GM12878 (cell line): ENCODE measurements at regions of chr12 and their contacts with region 1.

Region 1: DNA sequence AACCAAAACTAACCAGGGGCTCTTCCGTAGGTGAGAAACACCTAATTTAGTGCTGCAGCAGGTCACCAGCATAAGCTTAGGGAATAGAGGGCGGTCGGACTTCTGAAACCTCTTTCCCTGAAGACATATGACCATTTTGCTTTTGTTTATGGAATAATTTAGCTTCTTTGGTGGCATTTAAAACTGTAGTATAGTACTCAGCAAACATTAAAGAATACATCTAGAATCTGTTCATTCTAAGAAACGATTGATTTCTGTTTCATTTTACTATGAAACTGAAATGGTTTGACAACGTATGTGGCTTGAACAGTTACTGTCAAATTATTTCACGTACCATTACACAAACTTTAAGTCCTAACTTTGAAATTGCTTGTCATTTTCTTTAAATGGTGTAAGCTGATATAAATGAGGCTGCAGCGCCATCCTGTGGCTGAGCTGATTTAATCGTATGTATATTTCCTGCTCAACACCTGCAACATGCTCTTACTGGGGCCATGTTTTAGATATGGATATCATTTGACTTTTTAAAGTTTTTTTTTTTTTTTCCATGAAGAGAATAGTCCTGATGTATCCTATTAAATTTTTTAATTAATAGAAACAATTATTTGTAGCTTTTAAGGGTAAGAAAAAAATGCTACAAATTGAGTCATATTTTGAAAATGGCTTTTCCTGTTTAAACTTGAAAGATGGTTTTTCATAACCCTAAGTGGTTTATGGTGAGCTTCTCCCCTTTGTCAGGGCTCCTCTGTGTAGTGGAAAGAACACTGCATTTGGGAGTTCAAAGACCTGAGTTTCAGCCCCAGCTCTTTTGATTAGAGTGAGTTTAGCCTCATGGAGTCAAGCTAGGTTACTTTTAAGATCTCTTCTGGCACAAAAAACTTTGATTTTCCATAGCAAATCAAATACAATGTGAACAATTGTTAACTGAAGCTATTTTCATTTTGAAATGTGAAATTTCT is 27.4 kb downstream of the CFAP54 start:
- DNase-seq: peak; percentile 95
- ATAC-seq: peak; percentile 80
- H3K4me3 ChIP-seq: peak overlapping the region; percentile 24; the same call in 1 of the 2 replicates
- H3K27ac ChIP-seq: peak overlapping the region; percentile 64
- H3K4me1 ChIP-seq: peaks cover 16% of the 10 kb centered on the region
- H3K27me3 ChIP-seq: no peaks in the 10 kb centered on the region
- CTCF ChIP-seq: peak; percentile 42 to 87 (median 60); a peak in 5 of 6 replicates
- EP300 ChIP-seq: no peak
- POLR2A ChIP-seq: no peak
- RAD21 ChIP-seq: peak; percentile 91

Region 2: DNA sequence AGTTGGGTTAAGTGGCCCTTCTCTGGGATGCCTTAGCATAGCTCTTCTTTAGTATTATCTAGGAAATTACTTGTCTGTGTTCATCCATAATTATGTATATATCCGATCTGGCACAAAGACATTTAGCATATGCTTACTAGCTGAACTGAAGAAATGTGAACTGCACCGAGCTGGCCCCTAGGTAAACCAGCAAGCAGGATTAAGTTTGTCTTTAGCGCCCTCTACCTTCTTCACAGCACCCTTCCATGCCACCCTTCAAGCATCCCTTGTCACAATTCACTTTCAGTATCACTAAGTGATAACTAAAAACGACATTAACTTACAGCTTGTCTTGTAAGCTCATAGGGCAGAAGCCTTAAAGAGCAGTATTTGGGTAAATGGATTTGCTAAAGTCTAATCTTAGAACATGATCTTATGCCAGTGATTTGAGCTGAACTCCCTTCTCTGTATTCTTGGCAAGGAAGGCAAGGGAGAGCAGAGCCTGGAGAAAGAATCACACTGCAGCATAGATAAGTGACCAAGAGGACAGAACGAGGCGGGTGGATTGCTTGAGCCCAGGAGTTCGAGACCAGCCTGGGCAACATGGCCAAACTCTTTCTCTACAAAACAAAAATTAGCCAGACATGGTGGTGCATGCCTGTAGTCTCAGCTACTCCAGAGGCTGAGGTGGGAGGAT is 518.0 kb before region 1 on chr12:
- CTCF ChIA-PET with region 1: interaction called, 15 read pairs
- POLR2A ChIA-PET with region 1: no interaction called
- RAD21 ChIA-PET with region 1: interaction called, 5 read pairs
- SMC1A ChIA-PET with region 1: interaction called, 17 read pairs
- in situ Hi-C with region 1: no loop called
- intact Hi-C with region 1: no loop called
- DNase-seq: peak; percentile 34
- ATAC-seq: peak; percentile 99
- H3K4me3 ChIP-seq: no peak overlapping the region
- H3K27ac ChIP-seq: no peak overlapping the region
- H3K4me1 ChIP-seq: no peaks in the 10 kb centered on the region
- H3K27me3 ChIP-seq: no peaks in the 10 kb centered on the region
- CTCF ChIP-seq: peak; percentile 69 to 79 (median 73); a peak in 5 of 6 replicates
- EP300 ChIP-seq: no peak
- POLR2A ChIP-seq: no peak
- RAD21 ChIP-seq: peak; percentile 69

Region 3: DNA sequence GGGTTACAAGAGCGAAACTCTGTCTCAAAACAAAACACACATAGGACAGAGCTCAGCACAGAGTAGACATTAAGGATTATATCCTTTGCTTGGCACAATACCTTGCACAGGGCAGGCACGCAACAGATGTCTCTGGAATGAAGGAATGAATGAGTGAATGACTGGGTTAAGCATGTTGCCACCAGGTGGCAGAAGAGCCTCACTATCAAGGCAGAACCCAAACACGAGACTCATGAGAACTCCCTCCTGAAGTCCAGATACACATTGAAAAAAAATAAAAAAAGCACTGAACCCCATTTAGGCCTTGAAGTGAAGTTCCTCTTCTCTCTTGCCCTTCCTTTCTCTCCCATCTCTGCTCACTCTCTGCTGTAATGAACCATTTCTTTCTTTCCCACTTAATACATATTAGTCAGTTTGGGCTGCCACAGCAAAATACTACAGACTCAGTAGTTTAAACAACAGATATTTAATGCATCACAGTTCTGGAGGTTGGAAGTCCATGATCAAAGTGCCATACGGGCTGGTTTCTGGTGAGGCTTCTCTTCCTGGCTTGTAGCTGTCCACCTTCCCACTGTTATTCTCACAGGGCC is 454.8 kb before region 1 on chr12:
- CTCF ChIA-PET with region 1: interaction called, 38 read pairs
- POLR2A ChIA-PET with region 1: no interaction called
- RAD21 ChIA-PET with region 1: interaction called, 13 read pairs
- SMC1A ChIA-PET with region 1: interaction called, 36 read pairs
- in situ Hi-C with region 1: loop called (anchors 5 kb)
- intact Hi-C with region 1: loop called (anchors 1 kb)
- DNase-seq: peak; percentile 79
- ATAC-seq: peak; percentile 96
- H3K4me3 ChIP-seq: no peak overlapping the region
- H3K27ac ChIP-seq: no peak overlapping the region
- H3K4me1 ChIP-seq: peaks cover 4% of the 10 kb centered on the region; the same call in 1 of the 2 replicates
- H3K27me3 ChIP-seq: no peaks in the 10 kb centered on the region
- CTCF ChIP-seq: peak; percentile 67 to 88 (median 81); a peak in 5 of 6 replicates
- EP300 ChIP-seq: no peak
- POLR2A ChIP-seq: no peak
- RAD21 ChIP-seq: peak; percentile 91

Region 4: DNA sequence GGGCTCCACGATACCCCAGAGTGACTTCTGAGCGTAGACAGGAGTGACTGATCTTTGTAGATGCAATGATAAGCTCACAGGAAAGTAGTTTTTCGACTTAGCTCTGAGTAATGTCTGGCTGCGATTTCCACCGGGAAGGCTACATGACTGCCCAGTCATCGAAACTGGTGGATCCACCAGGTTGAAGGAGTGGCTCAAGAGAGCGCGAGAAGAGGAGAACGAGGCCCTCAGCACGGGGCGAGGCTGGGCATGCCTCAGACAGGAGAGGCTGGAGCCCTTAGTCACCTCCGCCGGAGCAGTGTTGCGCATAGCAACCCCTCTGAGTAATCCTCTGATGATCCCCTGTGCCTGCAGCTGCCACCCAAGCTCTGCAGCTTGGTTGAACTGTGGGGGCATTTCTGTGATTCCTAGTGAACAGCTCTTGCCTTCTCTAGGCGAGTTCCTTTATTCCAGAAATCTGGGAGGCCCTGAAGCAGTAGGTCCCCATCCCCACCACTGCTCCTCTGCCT is 297.0 kb before region 1 on chr12:
- CTCF ChIA-PET with region 1: interaction called, 70 read pairs
- POLR2A ChIA-PET with region 1: interaction called, 6 read pairs
- RAD21 ChIA-PET with region 1: interaction called, 62 read pairs
- SMC1A ChIA-PET with region 1: interaction called, 73 read pairs
- in situ Hi-C with region 1: loop called (anchors 5 kb)
- intact Hi-C with region 1: loop called (anchors 2 kb)
- DNase-seq: no peak
- ATAC-seq: no peak
- H3K4me3 ChIP-seq: no peak overlapping the region
- H3K27ac ChIP-seq: no peak overlapping the region
- H3K4me1 ChIP-seq: peaks cover 13% of the 10 kb centered on the region
- H3K27me3 ChIP-seq: no peaks in the 10 kb centered on the region
- CTCF ChIP-seq: no peak
- EP300 ChIP-seq: no peak
- POLR2A ChIP-seq: no peak
- RAD21 ChIP-seq: no peak

Region 5: DNA sequence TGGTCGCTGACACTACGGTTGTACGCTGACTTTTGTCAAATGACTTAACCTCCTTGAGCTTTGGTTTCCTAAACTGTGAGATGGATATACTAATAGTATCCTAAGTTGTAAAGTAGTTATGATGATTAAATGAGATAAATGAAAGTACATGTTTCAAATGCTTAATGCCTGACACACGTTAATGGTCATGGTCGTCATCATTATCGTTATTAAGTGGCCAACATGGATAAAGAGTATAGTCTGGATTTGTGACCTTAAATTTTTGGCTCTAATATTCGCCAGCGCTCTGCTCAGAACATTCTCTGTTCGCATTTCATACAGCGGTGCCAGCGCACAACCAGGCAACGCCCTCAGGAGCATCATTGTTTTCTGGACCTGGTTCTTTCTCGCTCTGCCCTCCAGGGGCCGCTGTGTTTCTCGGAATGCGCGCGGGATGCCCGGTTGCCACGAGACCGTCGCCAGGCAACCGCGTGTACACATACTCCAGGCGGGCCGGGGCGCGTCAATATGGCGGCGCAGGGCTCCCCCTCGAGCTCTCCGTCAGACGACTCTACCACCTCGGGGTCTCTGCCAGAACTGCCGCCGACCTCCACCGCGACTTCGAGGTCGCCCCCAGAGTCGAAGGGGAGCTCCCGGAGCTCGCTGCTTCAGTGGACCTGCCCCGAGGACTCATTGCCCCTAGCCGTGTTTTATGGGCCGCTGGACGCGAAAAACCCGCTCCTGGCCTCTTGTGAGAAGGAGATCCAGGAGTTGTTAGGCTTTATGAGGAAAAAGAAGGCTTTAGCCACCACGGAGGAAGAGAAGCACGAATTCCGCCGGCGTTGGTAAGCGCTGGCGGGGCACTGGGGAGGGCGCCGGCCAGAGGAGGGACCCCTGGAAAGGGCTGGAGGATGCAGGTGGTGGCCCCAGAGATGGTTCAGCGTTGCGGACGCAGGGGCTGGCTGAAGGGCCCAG is 27.4 kb before region 1 on chr12 and contains the start of gene CFAP54:
- CTCF ChIA-PET with region 1: interaction called, 304 read pairs
- POLR2A ChIA-PET with region 1: interaction called, 7 read pairs
- RAD21 ChIA-PET with region 1: interaction called, 118 read pairs
- SMC1A ChIA-PET with region 1: interaction called, 237 read pairs
- in situ Hi-C with region 1: no loop called
- intact Hi-C with region 1: loop called (anchors 1 kb)
- DNase-seq: peak; percentile 65
- ATAC-seq: peak; percentile 91
- H3K4me3 ChIP-seq: peak within 1 kb of the TSS; percentile 73
- H3K27ac ChIP-seq: no peak within 1 kb of the TSS
- H3K4me1 ChIP-seq: peaks cover 14% of the 10 kb centered on the region
- H3K27me3 ChIP-seq: no peaks in the 10 kb centered on the region
- CTCF ChIP-seq: peak; percentile 88 to 98 (median 91)
- EP300 ChIP-seq: peak; percentile 12 to 40; a peak in 2 of 4 replicates
- POLR2A ChIP-seq: no peak
- RAD21 ChIP-seq: peak; percentile 80
- polyA plus RNA-seq, gene CFAP54: 0.19 to 0.55 TPM

Region 6: DNA sequence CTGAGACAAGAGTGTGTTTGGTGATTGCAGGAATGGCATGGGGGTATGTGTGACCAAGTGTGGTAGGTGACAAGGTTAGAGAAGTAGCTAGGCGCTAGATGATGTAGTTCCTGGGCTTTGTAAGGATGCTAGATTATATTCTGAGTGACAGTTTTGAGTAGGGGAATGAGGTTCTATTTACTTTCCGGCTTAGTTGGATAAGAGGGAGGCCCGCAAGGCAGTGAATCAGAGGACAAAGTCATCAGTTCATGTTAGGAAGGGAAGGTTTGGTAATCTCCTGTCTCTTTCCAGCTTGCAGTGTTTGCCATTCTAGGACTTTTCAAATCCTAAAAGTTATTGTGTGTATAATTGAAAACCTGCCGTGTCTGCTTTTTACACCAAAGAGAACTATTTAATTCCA is 17.6 kb after region 1 on chr12:
- CTCF ChIA-PET with region 1: interaction called, 7 read pairs
- POLR2A ChIA-PET with region 1: no interaction called
- RAD21 ChIA-PET with region 1: interaction called, 8 read pairs
- SMC1A ChIA-PET with region 1: interaction called, 11 read pairs
- in situ Hi-C with region 1: no loop called
- intact Hi-C with region 1: no loop called
- DNase-seq: no peak
- ATAC-seq: no peak
- H3K4me3 ChIP-seq: no peak overlapping the region
- H3K27ac ChIP-seq: no peak overlapping the region
- H3K4me1 ChIP-seq: no peaks in the 10 kb centered on the region
- H3K27me3 ChIP-seq: no peaks in the 10 kb centered on the region
- CTCF ChIP-seq: no peak
- EP300 ChIP-seq: no peak
- POLR2A ChIP-seq: no peak
- RAD21 ChIP-seq: no peak

Region 7: GRCh38 chr12:96578526-96579125 is 61.9 kb after region 1 on chr12:
- CTCF ChIA-PET with region 1: interaction called, 29 read pairs
- POLR2A ChIA-PET with region 1: no interaction called
- RAD21 ChIA-PET with region 1: interaction called, 16 read pairs
- SMC1A ChIA-PET with region 1: interaction called, 18 read pairs
- in situ Hi-C with region 1: no loop called
- intact Hi-C with region 1: no loop called
- DNase-seq: peak; percentile 57
- ATAC-seq: peak; percentile 99
- H3K4me3 ChIP-seq: no peak overlapping the region
- H3K27ac ChIP-seq: no peak overlapping the region
- H3K4me1 ChIP-seq: no peaks in the 10 kb centered on the region
- H3K27me3 ChIP-seq: no peaks in the 10 kb centered on the region
- CTCF ChIP-seq: peak; percentile 52 to 79 (median 57); a peak in 5 of 6 replicates
- EP300 ChIP-seq: no peak
- POLR2A ChIP-seq: no peak
- RAD21 ChIP-seq: peak; percentile 93

Region 8: DNA sequence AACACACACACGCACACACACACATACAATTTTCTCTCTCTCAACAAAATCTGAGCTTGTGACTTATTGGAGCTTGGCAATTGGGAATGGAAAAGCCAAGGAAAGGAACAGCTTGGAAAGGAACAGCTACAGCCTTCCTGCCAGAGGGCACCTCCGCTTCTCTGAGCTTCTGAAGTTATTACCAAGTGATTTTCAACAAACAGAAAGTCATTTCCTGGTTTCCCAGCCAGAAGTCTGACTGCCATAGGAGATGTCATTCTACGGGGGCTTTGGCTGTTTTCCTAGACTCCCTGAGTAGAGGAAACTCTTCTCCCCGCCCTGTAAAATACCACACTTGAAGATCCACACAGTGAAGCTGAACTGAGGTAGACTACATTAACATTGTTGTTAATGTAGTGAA is 171.0 kb after region 1 on chr12:
- CTCF ChIA-PET with region 1: no interaction called
- POLR2A ChIA-PET with region 1: no interaction called
- RAD21 ChIA-PET with region 1: no interaction called
- SMC1A ChIA-PET with region 1: no interaction called
- in situ Hi-C with region 1: no loop called
- intact Hi-C with region 1: no loop called
- DNase-seq: no peak
- ATAC-seq: no peak
- H3K4me3 ChIP-seq: no peak overlapping the region
- H3K27ac ChIP-seq: no peak overlapping the region
- H3K4me1 ChIP-seq: no peaks in the 10 kb centered on the region
- H3K27me3 ChIP-seq: no peaks in the 10 kb centered on the region
- CTCF ChIP-seq: no peak
- EP300 ChIP-seq: no peak
- POLR2A ChIP-seq: no peak
- RAD21 ChIP-seq: no peak